ENCODE measurements at regions of chr7 and their contacts with region 1.

Region 1: GRCh38 chr7:116446212-116446855 is 53.2 kb upstream of the CAV2 start:
- DNase-seq: no peak
- H3K4me3 ChIP-seq: no peak overlapping the region
- CTCF ChIP-seq: no peak

Region 2: GRCh38 chr7:116483271-116483942 is 37.1 kb after region 1 on chr7:
- in situ Hi-C with region 1: loop called (anchors 5 kb)
- DNase-seq: no peak
- H3K4me3 ChIP-seq: no peak overlapping the region
- CTCF ChIP-seq: no peak

Region 3: GRCh38 chr7:116834815-116835533 is 388.6 kb after region 1 on chr7:
- in situ Hi-C with region 1: no loop called
- DNase-seq: no peak
- H3K4me3 ChIP-seq: no peak overlapping the region
- CTCF ChIP-seq: no peak

Measured in astrocyte of the cerebellum (primary cell).